IMR-90 (cell line): ENCODE measurements at regions of chr11 and their contacts with region 1.

Region 1: GRCh38 chr11:20127671-20128527 is 32.4 kb downstream of the DBX1 start:
- DNase-seq: peak; percentile 69
- ATAC-seq: peak; percentile 82
- H3K4me3 ChIP-seq: no peak overlapping the region
- H3K27ac ChIP-seq: no peak overlapping the region
- H3K4me1 ChIP-seq: no peaks in the 10 kb centered on the region
- H3K27me3 ChIP-seq: no peaks in the 10 kb centered on the region; the same call in 1 of the 2 replicates
- CTCF ChIP-seq: peak; percentile 87
- POLR2A ChIP-seq: no peak
- RAD21 ChIP-seq: peak; percentile 88

Region 2: GRCh38 chr11:19566583-19567379 is 561.1 kb before region 1 on chr11:
- CTCF ChIA-PET with region 1: no interaction called
- POLR2A ChIA-PET with region 1: no interaction called
- dilution Hi-C with region 1: no loop called
- in situ Hi-C with region 1: loop called (anchors 5 kb)
- intact Hi-C with region 1: loop called (anchors 2 kb)
- DNase-seq: no peak
- ATAC-seq: no peak
- H3K4me3 ChIP-seq: no peak overlapping the region
- H3K27ac ChIP-seq: no peak overlapping the region
- H3K4me1 ChIP-seq: no peaks in the 10 kb centered on the region; the same call in 1 of the 2 replicates
- H3K27me3 ChIP-seq: peaks cover 1% of the 10 kb centered on the region
- CTCF ChIP-seq: no peak
- POLR2A ChIP-seq: no peak
- RAD21 ChIP-seq: no peak

Region 3: GRCh38 chr11:19756675-19757475 is 371.0 kb before region 1 on chr11:
- CTCF ChIA-PET with region 1: no interaction called
- POLR2A ChIA-PET with region 1: no interaction called
- dilution Hi-C with region 1: no loop called
- in situ Hi-C with region 1: no loop called
- intact Hi-C with region 1: loop called (anchors 10 kb)
- DNase-seq: no peak
- ATAC-seq: 0 out of 2 replicates have a peak, but pooled peaks have one; percentile 17
- H3K4me3 ChIP-seq: no peak overlapping the region
- H3K27ac ChIP-seq: no peak overlapping the region
- H3K4me1 ChIP-seq: peaks cover 5% of the 10 kb centered on the region; the same call in 1 of the 2 replicates
- H3K27me3 ChIP-seq: no peaks in the 10 kb centered on the region
- CTCF ChIP-seq: no peak
- POLR2A ChIP-seq: no peak
- RAD21 ChIP-seq: no peak

Region 4: GRCh38 chr11:19951558-19952115 is 176.3 kb before region 1 on chr11:
- CTCF ChIA-PET with region 1: interaction called, 23 read pairs
- POLR2A ChIA-PET with region 1: no interaction called
- dilution Hi-C with region 1: no loop called
- in situ Hi-C with region 1: loop called (anchors 5 kb)
- intact Hi-C with region 1: loop called (anchors 1 kb)
- DNase-seq: peak; percentile 70
- ATAC-seq: peak; percentile 69
- H3K4me3 ChIP-seq: no peak overlapping the region; the same call in 1 of the 2 replicates
- H3K27ac ChIP-seq: no peak overlapping the region
- H3K4me1 ChIP-seq: peaks cover 15% of the 10 kb centered on the region
- H3K27me3 ChIP-seq: no peaks in the 10 kb centered on the region
- CTCF ChIP-seq: peak; percentile 73
- POLR2A ChIP-seq: no peak
- RAD21 ChIP-seq: peak; percentile 75

Region 5: DNA sequence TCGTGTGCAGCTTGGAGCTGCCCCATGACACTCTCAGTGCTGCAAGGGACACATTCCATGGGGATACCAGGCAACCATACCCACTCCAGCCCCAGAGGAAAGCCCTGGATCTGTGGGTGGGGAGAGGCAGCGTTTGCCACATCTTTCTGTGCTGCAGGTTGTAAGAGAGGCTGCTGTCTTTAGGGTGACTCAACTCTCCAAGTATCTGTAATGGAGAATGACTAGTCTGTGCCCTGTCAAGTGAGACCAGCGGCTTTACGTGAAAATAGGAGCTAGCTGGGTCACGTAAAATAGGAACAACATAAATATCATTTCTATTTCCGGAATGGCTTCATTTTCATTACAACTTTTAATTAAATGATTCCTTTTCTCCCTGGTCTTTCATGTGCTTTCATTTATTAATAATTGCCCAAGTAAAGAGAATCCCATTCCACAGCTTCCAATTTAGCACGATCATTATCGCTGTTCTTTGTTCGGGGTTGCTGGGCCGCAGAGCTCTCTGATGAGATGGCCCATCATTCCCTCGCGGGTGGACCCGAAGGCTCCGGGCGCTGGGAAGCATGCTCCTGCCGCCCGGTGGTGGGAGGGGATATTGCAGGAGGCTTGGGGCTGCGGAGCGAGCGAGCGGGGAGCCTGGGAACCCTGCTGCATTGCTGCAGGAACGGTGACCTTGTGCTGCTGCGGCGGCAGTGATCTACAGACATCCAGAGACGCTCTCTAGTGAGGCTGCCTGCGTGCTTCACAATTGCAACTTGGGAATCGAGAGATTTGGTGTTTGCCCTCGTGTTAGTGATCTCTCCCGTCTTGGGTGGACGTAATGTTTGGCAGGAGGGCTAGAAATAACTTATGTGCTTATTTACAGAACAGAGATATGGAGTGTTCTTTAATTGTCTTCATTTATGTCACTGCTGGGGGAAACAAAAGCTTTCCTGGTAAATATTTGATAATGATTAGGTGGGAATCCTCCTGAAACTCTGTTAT is 482.1 kb after region 1 on chr11:
- CTCF ChIA-PET with region 1: no interaction called
- POLR2A ChIA-PET with region 1: no interaction called
- dilution Hi-C with region 1: no loop called
- in situ Hi-C with region 1: no loop called
- intact Hi-C with region 1: loop called (anchors 1 kb)
- DNase-seq: peak; percentile 48
- ATAC-seq: peak; percentile 100
- H3K4me3 ChIP-seq: no peak overlapping the region
- H3K27ac ChIP-seq: no peak overlapping the region
- H3K4me1 ChIP-seq: no peaks in the 10 kb centered on the region
- H3K27me3 ChIP-seq: peaks cover 24% of the 10 kb centered on the region
- CTCF ChIP-seq: peak; percentile 92
- POLR2A ChIP-seq: no peak
- RAD21 ChIP-seq: peak; percentile 82